ENCODE measurements at regions of chr22 and their contacts with region 1.

Region 1: DNA sequence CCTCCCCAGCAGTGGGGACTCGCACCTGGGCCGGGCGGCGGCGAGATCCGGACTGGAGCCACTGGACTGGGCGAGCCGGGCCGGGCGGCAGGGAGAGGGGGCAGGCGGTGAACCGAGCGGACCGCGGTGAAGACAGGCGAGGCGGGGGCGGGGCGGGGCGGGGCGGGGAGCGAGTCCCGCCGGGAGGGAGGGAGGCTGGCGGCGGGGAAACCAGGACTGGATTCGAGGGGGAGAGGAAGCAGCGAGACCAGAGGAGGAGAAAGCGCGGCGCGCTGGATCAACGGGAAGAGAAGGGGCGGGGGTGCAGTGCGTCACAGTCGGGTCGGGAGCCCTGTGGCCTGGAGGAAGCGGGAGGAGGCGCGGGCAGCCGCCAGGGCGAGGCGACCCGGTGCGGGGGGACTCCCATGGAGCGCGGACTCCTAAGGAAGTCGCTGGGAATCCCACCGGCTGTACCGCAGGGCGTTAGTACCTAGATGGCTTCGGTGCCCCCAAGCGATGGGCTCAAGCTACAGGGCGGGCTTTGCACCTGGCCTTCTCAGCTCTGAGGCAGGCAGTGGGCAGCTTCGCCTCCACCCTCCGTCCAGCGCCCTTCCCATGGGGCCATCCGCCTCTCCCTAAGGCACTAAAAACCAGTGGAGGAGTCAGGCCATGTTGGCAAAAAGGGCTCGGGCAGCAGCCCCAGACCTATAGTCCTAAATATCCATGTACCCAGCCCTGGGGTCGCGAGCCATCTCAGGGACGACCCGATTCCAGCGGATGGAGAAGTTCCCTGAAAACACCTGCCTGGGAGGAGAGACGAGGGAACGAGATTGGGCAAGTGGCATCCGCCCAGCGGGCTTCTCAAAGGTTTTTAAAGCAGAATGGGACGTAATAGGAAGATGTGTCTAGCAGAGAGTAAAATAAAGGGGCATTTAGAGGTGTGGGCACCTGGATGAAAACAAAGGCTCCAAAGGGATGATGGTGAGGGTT is at the start of gene TMEM121B:
- DNase-seq: peak in 2 of 9 experiments; percentile 14 to 29
- ATAC-seq: no peak
- H3K4me3 ChIP-seq: no peak within 1 kb of the TSS
- H3K4me3 Mint-ChIP-seq: peak within 1 kb of the TSS; percentile 69
- H3K27ac ChIP-seq: no peak within 1 kb of the TSS
- H3K27ac Mint-ChIP-seq: no peak within 1 kb of the TSS
- H3K4me1 ChIP-seq: peaks cover 44% of the 10 kb centered on the region
- H3K4me1 Mint-ChIP-seq: peaks cover 29% of the 10 kb centered on the region
- H3K27me3 ChIP-seq: peaks cover 11% of the 10 kb centered on the region in 2 experiments
- H3K27me3 Mint-ChIP-seq: peaks cover 10% of the 10 kb centered on the region
- CTCF ChIP-seq: no peak
- total RNA-seq, gene TMEM121B: 0.11 TPM in 1 of 2 experiments, not detected in the other

Region 2: GRCh38 chr22:17047656-17048055 is 73.9 kb before region 1 on chr22:
- CTCF ChIA-PET with region 1: no interaction called
- POLR2A ChIA-PET with region 1: no interaction called
- intact Hi-C with region 1: no loop called
- DNase-seq: no peak
- ATAC-seq: no peak
- H3K4me3 ChIP-seq: no peak overlapping the region
- H3K4me3 Mint-ChIP-seq: no peak overlapping the region
- H3K27ac ChIP-seq: no peak overlapping the region
- H3K27ac Mint-ChIP-seq: no peak overlapping the region
- H3K4me1 ChIP-seq: no peaks in the 10 kb centered on the region
- H3K4me1 Mint-ChIP-seq: no peaks in the 10 kb centered on the region
- H3K27me3 ChIP-seq: no peaks in the 10 kb centered on the region
- H3K27me3 Mint-ChIP-seq: peaks cover 3% of the 10 kb centered on the region
- CTCF ChIP-seq: no peak

Region 3: DNA sequence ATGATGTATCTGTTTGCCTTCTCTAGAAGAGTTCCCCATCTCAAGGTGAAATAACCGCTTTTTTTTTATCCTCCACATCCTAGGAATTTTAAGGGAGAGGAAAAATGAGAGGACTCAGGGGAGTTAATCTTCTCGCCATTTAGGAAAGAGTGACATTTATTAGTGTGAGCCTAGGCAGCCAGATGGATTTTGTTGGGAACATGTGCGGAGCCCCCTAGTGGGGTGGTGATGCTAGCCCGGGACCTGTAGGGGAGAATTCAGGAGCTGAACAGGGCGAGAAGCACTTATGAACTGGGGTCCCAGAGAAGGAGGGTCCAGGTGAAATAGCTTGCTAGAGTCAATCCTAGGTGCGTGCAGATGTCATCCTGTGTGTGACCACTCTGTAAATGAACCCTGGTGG is 26.0 kb before region 1 on chr22:
- CTCF ChIA-PET with region 1: no interaction called
- POLR2A ChIA-PET with region 1: no interaction called
- intact Hi-C with region 1: loop called in 1 of 2 experiments (anchors 2 kb)
- DNase-seq: no peak
- ATAC-seq: no peak
- H3K4me3 ChIP-seq: no peak overlapping the region
- H3K4me3 Mint-ChIP-seq: no peak overlapping the region
- H3K27ac ChIP-seq: no peak overlapping the region
- H3K27ac Mint-ChIP-seq: peak overlapping the region; percentile 62
- H3K4me1 ChIP-seq: peaks cover 85% of the 10 kb centered on the region
- H3K4me1 Mint-ChIP-seq: peaks cover 87% of the 10 kb centered on the region
- H3K27me3 ChIP-seq: no peaks in the 10 kb centered on the region
- H3K27me3 Mint-ChIP-seq: no peaks in the 10 kb centered on the region
- CTCF ChIP-seq: no peak

Region 4: GRCh38 chr22:17339095-17339693 is 217.7 kb after region 1 on chr22:
- CTCF ChIA-PET with region 1: no interaction called
- POLR2A ChIA-PET with region 1: no interaction called
- intact Hi-C with region 1: no loop called
- DNase-seq: no peak
- ATAC-seq: no peak
- H3K4me3 ChIP-seq: no peak overlapping the region
- H3K4me3 Mint-ChIP-seq: no peak overlapping the region
- H3K27ac ChIP-seq: no peak overlapping the region
- H3K27ac Mint-ChIP-seq: no peak overlapping the region
- H3K4me1 ChIP-seq: no peaks in the 10 kb centered on the region
- H3K4me1 Mint-ChIP-seq: no peaks in the 10 kb centered on the region
- H3K27me3 ChIP-seq: no peaks in the 10 kb centered on the region
- H3K27me3 Mint-ChIP-seq: peaks cover 5% of the 10 kb centered on the region
- CTCF ChIP-seq: no peak

Region 5: DNA sequence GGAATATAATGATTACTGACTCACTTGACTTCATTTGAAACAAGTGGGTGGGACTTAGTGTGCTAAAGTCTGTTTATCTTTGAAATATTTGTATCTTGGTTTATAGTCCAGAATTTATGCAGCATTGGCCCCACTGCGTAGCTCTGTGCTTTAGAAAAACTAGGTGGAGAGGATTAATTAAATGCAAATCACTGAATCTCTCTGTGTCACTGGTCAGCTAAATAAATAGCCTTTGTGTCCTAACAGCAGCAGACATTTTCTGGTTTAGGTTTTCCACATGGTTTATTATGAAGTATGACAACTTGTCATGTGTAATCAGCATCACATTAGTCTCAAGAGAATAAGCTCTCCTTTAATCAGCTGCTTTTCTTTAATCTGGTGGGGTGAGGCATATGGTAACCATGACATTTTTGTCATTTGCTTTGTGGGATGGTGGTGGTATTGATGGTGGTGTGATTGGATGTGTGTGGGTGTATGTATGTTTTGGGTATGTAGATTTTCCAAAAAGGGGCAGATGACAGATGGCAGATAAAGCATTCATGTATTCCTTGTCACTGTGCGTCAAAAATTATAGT is 551.0 kb after region 1 on chr22:
- CTCF ChIA-PET with region 1: no interaction called
- POLR2A ChIA-PET with region 1: no interaction called
- intact Hi-C with region 1: no loop called
- DNase-seq: no peak
- ATAC-seq: no peak
- H3K4me3 ChIP-seq: no peak overlapping the region
- H3K4me3 Mint-ChIP-seq: no peak overlapping the region
- H3K27ac ChIP-seq: no peak overlapping the region
- H3K27ac Mint-ChIP-seq: no peak overlapping the region
- H3K4me1 ChIP-seq: no peaks in the 10 kb centered on the region
- H3K4me1 Mint-ChIP-seq: peaks cover 27% of the 10 kb centered on the region
- H3K27me3 ChIP-seq: no peaks in the 10 kb centered on the region
- H3K27me3 Mint-ChIP-seq: no peaks in the 10 kb centered on the region
- CTCF ChIP-seq: no peak